Naive thymus-derived CD4-positive, alpha-beta T cell (primary cell): ENCODE measurements at regions of chr6 and their contacts with region 1.

Region 1: DNA sequence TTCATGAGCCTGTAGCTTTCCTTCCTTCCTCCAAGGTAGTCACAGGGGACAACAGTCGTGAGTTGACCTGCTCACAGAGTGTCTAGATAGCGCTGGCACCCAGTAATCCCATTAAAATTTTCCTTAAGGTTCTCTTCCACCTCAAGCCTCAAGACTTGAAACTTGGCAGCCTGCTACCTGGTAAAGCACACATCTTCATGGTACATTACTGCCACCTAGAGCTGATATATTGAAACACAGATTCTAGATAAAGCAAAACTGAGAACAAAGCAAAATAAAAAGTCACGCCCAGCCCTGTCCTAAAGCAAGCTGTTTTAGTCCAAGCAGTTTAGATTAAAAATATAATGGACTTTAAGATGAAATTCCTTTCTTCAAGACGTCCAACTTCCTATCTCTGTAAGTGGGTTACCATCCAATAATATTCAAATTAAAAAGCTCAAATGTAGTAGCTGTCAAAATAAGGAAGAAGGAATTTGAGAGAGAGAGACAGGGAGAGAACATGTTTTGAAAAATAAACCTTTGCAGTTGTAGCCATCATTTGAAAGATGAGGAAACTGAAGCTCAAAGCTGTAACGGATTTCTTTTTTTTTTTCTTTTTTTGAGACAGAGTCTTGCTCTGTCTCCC is 50.7 kb upstream of the CD83 start:
- DNase-seq: peak in 7 of 9 donors; percentile 32 to 56 (median 43)
- ATAC-seq: peak; percentile 90
- H3K4me3 ChIP-seq: no peak overlapping the region
- H3K4me3 Mint-ChIP-seq: no peak overlapping the region
- H3K27ac ChIP-seq: no peak overlapping the region
- H3K27ac Mint-ChIP-seq: peak overlapping the region in 1 of 9 donors; percentile 82
- H3K4me1 ChIP-seq: no peaks in the 10 kb centered on the region
- H3K4me1 Mint-ChIP-seq: peaks cover 0 to 21% (median 0%) of the 10 kb centered on the region in 7 donors
- H3K27me3 ChIP-seq: no peaks in the 10 kb centered on the region
- H3K27me3 Mint-ChIP-seq: peaks cover 0 to 18% (median 14%) of the 10 kb centered on the region in 5 donors

Region 2: GRCh38 chr6:12911387-12911960 is 1155.4 kb before region 1 on chr6:
- CTCF ChIA-PET with region 1: no interaction called
- POLR2A ChIA-PET with region 1: no interaction called
- intact Hi-C with region 1: loop called in 1 of 2 experiments (anchors 5 kb)
- DNase-seq: peak in 3 of 9 donors; percentile 4 to 16 (median 7)
- ATAC-seq: no peak
- H3K4me3 ChIP-seq: no peak overlapping the region
- H3K4me3 Mint-ChIP-seq: no peak overlapping the region
- H3K27ac ChIP-seq: no peak overlapping the region
- H3K27ac Mint-ChIP-seq: no peak overlapping the region
- H3K4me1 ChIP-seq: no peaks in the 10 kb centered on the region
- H3K4me1 Mint-ChIP-seq: peaks cover 0 to 2% (median 0%) of the 10 kb centered on the region in 7 donors
- H3K27me3 ChIP-seq: no peaks in the 10 kb centered on the region
- H3K27me3 Mint-ChIP-seq: peaks cover 0 to 24% (median 8%) of the 10 kb centered on the region in 5 donors

Region 3: GRCh38 chr6:13795041-13795750 is 271.7 kb before region 1 on chr6:
- CTCF ChIA-PET with region 1: interaction called, 13 read pairs
- POLR2A ChIA-PET with region 1: interaction called, 6 read pairs
- intact Hi-C with region 1: loop called (anchors 1 kb)
- DNase-seq: peak; percentile 54 to 80 (median 77)
- ATAC-seq: peak; percentile 98
- H3K4me3 ChIP-seq: no peak overlapping the region
- H3K4me3 Mint-ChIP-seq: no peak overlapping the region
- H3K27ac ChIP-seq: no peak overlapping the region
- H3K27ac Mint-ChIP-seq: peak overlapping the region in 5 of 9 donors; percentile 7 to 50 (median 27)
- H3K4me1 ChIP-seq: no peaks in the 10 kb centered on the region
- H3K4me1 Mint-ChIP-seq: peaks cover 5 to 16% (median 6%) of the 10 kb centered on the region in 7 donors
- H3K27me3 ChIP-seq: no peaks in the 10 kb centered on the region
- H3K27me3 Mint-ChIP-seq: no peaks in the 10 kb centered on the region

Region 4: GRCh38 chr6:13908955-13909381 is 157.9 kb before region 1 on chr6:
- CTCF ChIA-PET with region 1: interaction called, 3 read pairs
- POLR2A ChIA-PET with region 1: no interaction called
- intact Hi-C with region 1: loop called (anchors 1 kb)
- DNase-seq: peak in 7 of 9 donors; percentile 22 to 56 (median 36)
- ATAC-seq: peak; percentile 92
- H3K4me3 ChIP-seq: no peak overlapping the region
- H3K4me3 Mint-ChIP-seq: no peak overlapping the region
- H3K27ac ChIP-seq: no peak overlapping the region
- H3K27ac Mint-ChIP-seq: no peak overlapping the region
- H3K4me1 ChIP-seq: peaks cover 0 to 5% of the 10 kb centered on the region in 2 donors
- H3K4me1 Mint-ChIP-seq: peaks cover 0 to 8% (median 3%) of the 10 kb centered on the region in 7 donors
- H3K27me3 ChIP-seq: no peaks in the 10 kb centered on the region
- H3K27me3 Mint-ChIP-seq: peaks cover 24 to 51% (median 39%) of the 10 kb centered on the region in 5 donors

Region 5: DNA sequence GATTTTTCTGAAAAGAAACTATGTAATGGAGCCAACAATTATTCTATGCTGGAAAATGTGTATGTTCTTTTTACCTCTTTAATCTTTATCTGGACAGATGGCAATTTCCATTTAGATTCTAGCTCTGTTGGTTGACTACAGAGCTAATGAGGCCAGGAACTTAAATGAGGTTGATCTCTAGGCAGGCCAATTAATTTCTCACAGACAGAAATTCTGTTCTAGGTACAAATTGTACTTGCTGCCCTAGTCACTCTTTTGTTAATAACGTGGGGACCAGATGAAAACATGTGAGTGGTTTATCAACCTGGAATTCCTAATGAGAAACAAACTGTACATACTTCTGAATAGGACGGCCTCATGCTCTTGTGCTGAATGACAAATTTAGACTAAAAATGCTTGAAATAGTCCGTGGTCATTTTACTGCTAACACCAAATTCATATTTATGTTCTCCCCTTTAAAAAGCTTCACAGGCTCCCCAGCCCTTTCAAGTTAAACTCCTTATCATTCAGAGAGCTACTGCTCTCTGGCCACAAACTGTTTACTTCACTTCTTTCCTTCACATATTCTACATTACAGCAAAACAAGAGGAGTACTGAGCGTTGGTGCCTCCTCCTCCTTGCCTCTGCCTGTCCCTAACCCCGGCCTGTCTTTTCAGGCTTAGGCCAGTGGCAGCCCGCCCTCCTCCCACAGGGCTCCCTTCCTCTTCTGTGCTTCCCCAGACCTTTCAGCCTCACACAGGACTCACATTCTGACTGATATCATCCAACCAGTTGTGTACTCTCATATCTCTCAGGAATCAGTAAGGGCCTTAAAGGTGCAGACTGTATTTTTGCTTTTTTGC is 1554.5 kb after region 1 on chr6:
- CTCF ChIA-PET with region 1: no interaction called
- POLR2A ChIA-PET with region 1: no interaction called
- intact Hi-C with region 1: loop called in 1 of 2 experiments (anchors 10 kb)
- DNase-seq: peak in 1 of 9 donors; percentile 34
- ATAC-seq: peak; percentile 86
- H3K4me3 ChIP-seq: no peak overlapping the region
- H3K4me3 Mint-ChIP-seq: peak overlapping the region in 1 of 10 donors; percentile 5
- H3K27ac ChIP-seq: no peak overlapping the region
- H3K27ac Mint-ChIP-seq: peak overlapping the region in 2 of 9 donors; percentile 3 to 52
- H3K4me1 ChIP-seq: no peaks in the 10 kb centered on the region
- H3K4me1 Mint-ChIP-seq: peaks cover 19 to 55% (median 42%) of the 10 kb centered on the region in 7 donors
- H3K27me3 ChIP-seq: no peaks in the 10 kb centered on the region
- H3K27me3 Mint-ChIP-seq: no peaks in the 10 kb centered on the region